ENCODE measurements at regions of chr6 and their contacts with region 1.

Region 1: DNA sequence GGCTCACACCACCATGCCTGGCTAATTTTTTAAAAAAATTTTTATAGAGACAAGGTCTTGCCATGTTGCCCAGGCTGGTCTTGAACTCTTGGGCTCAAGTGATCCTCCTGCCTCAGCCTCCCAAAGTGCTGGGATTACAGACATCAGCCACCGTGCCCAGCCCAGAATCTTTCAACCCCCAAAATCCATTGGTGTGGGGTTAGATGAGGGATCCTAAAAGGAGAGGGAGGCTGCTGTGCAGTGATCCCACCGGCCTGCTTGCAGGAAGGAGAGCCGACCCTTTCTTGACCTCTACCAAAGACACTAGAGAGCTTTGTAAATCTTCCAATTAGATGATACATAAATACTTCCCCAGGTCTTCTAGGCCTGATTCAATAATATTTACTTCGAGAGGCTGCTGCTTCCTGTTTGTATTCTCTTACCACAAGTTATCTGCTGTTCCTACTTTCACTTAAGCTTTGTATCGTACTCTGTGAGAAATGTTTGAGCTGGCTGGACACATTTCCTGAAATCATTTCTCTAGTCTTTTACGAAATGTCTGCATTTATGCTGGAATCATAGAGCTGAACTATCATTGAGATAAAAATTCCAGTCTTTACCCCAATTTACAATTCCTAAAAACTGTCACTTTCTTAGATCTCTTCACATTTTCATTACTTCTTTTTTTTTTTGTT is 49.3 kb upstream of the IER3 start:
- DNase-seq: peak in 6 of 14 experiments; percentile 6 to 79 (median 44)
- ATAC-seq: peak; percentile 95
- H3K4me3 ChIP-seq: peak overlapping the region; percentile 17
- H3K4me3 Mint-ChIP-seq: peak overlapping the region; percentile 76
- H3K27ac ChIP-seq: peak overlapping the region; percentile 72 to 79
- H3K27ac Mint-ChIP-seq: peak overlapping the region; percentile 98
- H3K4me1 ChIP-seq: peaks cover 52% of the 10 kb centered on the region
- H3K4me1 Mint-ChIP-seq: peaks cover 67% of the 10 kb centered on the region
- H3K27me3 ChIP-seq: no peaks in the 10 kb centered on the region
- H3K27me3 Mint-ChIP-seq: no peaks in the 10 kb centered on the region
- CTCF ChIP-seq: no peak

Region 2: GRCh38 chr6:30742316-30743098 is 51.2 kb before region 1 on chr6 and contains the start of gene FLOT1:
- CTCF ChIA-PET with region 1: no interaction called
- POLR2A ChIA-PET with region 1: interaction called, 11 read pairs
- intact Hi-C with region 1: no loop called
- DNase-seq: peak; percentile 52 to 93 (median 76)
- ATAC-seq: peak; percentile 53
- H3K4me3 ChIP-seq: peak within 1 kb of the TSS; percentile 85
- H3K4me3 Mint-ChIP-seq: peak within 1 kb of the TSS; percentile 97
- H3K27ac ChIP-seq: peak within 1 kb of the TSS; percentile 31 to 76
- H3K27ac Mint-ChIP-seq: peak within 1 kb of the TSS; percentile 91
- H3K4me1 ChIP-seq: peaks cover 66% of the 10 kb centered on the region
- H3K4me1 Mint-ChIP-seq: peaks cover 61% of the 10 kb centered on the region
- H3K27me3 ChIP-seq: no peaks in the 10 kb centered on the region
- H3K27me3 Mint-ChIP-seq: no peaks in the 10 kb centered on the region
- CTCF ChIP-seq: no peak
- total RNA-seq, gene FLOT1: 31.6 TPM

Region 3: GRCh38 chr6:30769088-30769852 is 24.4 kb before region 1 on chr6:
- CTCF ChIA-PET with region 1: no interaction called
- POLR2A ChIA-PET with region 1: interaction called, 24 read pairs
- intact Hi-C with region 1: no loop called
- DNase-seq: peak; percentile 29 to 83 (median 62)
- ATAC-seq: peak; percentile 86
- H3K4me3 ChIP-seq: peak overlapping the region; percentile 5
- H3K4me3 Mint-ChIP-seq: peak overlapping the region; percentile 79
- H3K27ac ChIP-seq: no peak overlapping the region
- H3K27ac Mint-ChIP-seq: peak overlapping the region; percentile 52
- H3K4me1 ChIP-seq: peaks cover 40% of the 10 kb centered on the region
- H3K4me1 Mint-ChIP-seq: peaks cover 76% of the 10 kb centered on the region
- H3K27me3 ChIP-seq: no peaks in the 10 kb centered on the region
- H3K27me3 Mint-ChIP-seq: no peaks in the 10 kb centered on the region
- CTCF ChIP-seq: no peak

Region 4: GRCh38 chr6:30781743-30782424 is 11.8 kb before region 1 on chr6:
- CTCF ChIA-PET with region 1: interaction called, 3 read pairs
- POLR2A ChIA-PET with region 1: interaction called, 12 read pairs
- intact Hi-C with region 1: no loop called
- DNase-seq: peak in 8 of 14 experiments; percentile 16 to 79 (median 37)
- ATAC-seq: peak; percentile 39
- H3K4me3 ChIP-seq: no peak overlapping the region
- H3K4me3 Mint-ChIP-seq: peak overlapping the region; percentile 32
- H3K27ac ChIP-seq: no peak overlapping the region
- H3K27ac Mint-ChIP-seq: peak overlapping the region; percentile 64
- H3K4me1 ChIP-seq: peaks cover 30% of the 10 kb centered on the region
- H3K4me1 Mint-ChIP-seq: peaks cover 70% of the 10 kb centered on the region
- H3K27me3 ChIP-seq: no peaks in the 10 kb centered on the region
- H3K27me3 Mint-ChIP-seq: no peaks in the 10 kb centered on the region
- CTCF ChIP-seq: no peak

Region 5: GRCh38 chr6:30814136-30815040 is 20.7 kb after region 1 on chr6:
- CTCF ChIA-PET with region 1: no interaction called
- POLR2A ChIA-PET with region 1: interaction called, 12 read pairs
- intact Hi-C with region 1: no loop called
- DNase-seq: peak in 12 of 14 experiments; percentile 16 to 76 (median 52)
- ATAC-seq: peak; percentile 84
- H3K4me3 ChIP-seq: no peak overlapping the region
- H3K4me3 Mint-ChIP-seq: peak overlapping the region; percentile 27
- H3K27ac ChIP-seq: peak overlapping the region in 1 of 2 donors; percentile 55
- H3K27ac Mint-ChIP-seq: peak overlapping the region; percentile 63
- H3K4me1 ChIP-seq: peaks cover 62% of the 10 kb centered on the region
- H3K4me1 Mint-ChIP-seq: peaks cover 63% of the 10 kb centered on the region
- H3K27me3 ChIP-seq: no peaks in the 10 kb centered on the region
- H3K27me3 Mint-ChIP-seq: no peaks in the 10 kb centered on the region
- CTCF ChIP-seq: no peak